CD8-positive, alpha-beta T cell (primary cell): ENCODE measurements at regions of chr6 and their contacts with region 1.

Region 1: DNA sequence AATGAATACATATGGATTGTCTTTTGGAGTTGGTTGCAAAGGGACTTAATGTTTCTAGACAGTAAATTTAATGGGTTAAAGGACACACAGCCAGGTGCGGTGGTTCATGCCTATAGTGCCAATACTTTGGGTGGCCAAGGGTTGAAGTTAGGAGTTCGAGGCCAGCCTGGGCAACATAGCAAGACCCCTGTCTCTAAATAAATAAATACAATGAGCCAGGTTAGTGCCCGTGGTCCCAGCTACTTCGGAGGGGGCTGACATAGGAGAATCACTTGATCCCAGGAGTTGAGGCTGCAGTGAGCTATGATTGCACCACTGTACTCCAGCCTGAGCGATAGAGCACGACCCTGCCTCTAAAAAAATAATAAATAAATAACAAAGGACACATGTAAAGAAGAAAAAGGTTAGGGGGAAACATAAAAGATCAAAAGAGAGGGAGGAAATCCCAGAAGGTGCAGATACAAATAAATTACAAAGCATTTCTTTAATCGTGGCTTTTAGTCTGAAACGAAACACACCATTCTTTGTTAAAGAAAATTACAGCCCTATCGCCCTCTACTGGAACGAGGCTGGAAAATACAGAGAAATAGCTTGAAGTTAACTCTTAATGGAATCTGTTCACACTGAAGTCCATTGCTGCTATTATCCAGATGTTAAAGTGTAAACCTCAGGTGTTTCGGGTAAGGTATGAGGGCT is 42.6 kb upstream of the SCML4 start:
- DNase-seq: peak in 6 of 9 experiments; percentile 9 to 75 (median 34)
- ATAC-seq: peak; percentile 70
- H3K4me3 ChIP-seq: no peak overlapping the region
- H3K4me3 Mint-ChIP-seq: no peak overlapping the region
- H3K27ac ChIP-seq: no peak overlapping the region
- H3K27ac Mint-ChIP-seq: no peak overlapping the region
- H3K4me1 ChIP-seq: no peaks in the 10 kb centered on the region
- H3K4me1 Mint-ChIP-seq: no peaks in the 10 kb centered on the region
- H3K27me3 ChIP-seq: no peaks in the 10 kb centered on the region
- H3K27me3 Mint-ChIP-seq: no peaks in the 10 kb centered on the region
- CTCF ChIP-seq: peak; percentile 82

Region 2: GRCh38 chr6:107132330-107132954 is 734.3 kb before region 1 on chr6:
- CTCF ChIA-PET with region 1: no interaction called
- POLR2A ChIA-PET with region 1: no interaction called
- intact Hi-C with region 1: loop called in 1 of 2 experiments (anchors 2 kb)
- DNase-seq: peak in 5 of 9 experiments; percentile 20 to 44 (median 33)
- ATAC-seq: no peak
- H3K4me3 ChIP-seq: no peak overlapping the region
- H3K4me3 Mint-ChIP-seq: no peak overlapping the region
- H3K27ac ChIP-seq: no peak overlapping the region
- H3K27ac Mint-ChIP-seq: no peak overlapping the region
- H3K4me1 ChIP-seq: no peaks in the 10 kb centered on the region
- H3K4me1 Mint-ChIP-seq: no peaks in the 10 kb centered on the region
- H3K27me3 ChIP-seq: no peaks in the 10 kb centered on the region
- H3K27me3 Mint-ChIP-seq: peaks cover 2% of the 10 kb centered on the region
- CTCF ChIP-seq: peak; percentile 39

Region 3: DNA sequence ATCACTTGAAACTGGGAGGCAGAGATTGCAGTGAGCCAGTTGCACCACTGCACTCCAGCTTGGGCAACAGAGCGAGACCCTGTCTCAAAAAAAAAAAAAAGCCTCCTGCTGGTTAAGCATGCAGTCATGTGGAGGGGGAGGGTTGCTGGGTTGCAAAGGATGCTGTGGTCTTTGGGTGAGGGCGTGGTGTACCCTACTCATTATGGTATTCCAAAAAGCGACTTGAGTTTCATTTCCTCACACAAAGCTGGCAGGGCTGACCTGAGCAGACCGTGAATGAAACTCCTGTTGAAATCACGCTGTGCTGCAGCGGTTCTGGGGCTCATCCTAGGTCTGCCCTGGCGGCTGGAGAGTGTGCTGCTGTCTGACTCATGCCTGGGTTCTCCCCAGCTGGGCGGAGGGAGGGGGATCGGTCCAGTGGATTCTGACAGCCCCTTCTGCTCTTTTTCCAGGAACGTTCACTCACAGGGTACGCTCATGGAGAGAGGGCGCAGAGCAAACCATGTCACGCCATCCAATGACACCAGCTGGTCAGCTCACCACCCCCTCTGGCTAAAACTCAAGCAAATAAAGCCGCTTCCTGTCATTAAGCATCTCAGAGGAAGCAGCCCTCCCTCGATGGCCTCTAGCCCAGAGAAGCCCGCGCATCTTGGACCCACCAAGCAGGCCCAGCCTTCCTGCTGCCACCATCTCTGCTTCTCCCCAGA is 208.8 kb before region 1 on chr6:
- CTCF ChIA-PET with region 1: no interaction called
- POLR2A ChIA-PET with region 1: no interaction called
- intact Hi-C with region 1: no loop called
- DNase-seq: peak in 8 of 9 experiments; percentile 29 to 68 (median 52)
- ATAC-seq: peak; percentile 90
- H3K4me3 ChIP-seq: peak overlapping the region; percentile 27 to 49
- H3K4me3 Mint-ChIP-seq: peak overlapping the region; percentile 81
- H3K27ac ChIP-seq: peak overlapping the region; percentile 4 to 47
- H3K27ac Mint-ChIP-seq: peak overlapping the region; percentile 78
- H3K4me1 ChIP-seq: peaks cover 30% of the 10 kb centered on the region
- H3K4me1 Mint-ChIP-seq: peaks cover 35% of the 10 kb centered on the region
- H3K27me3 ChIP-seq: no peaks in the 10 kb centered on the region
- H3K27me3 Mint-ChIP-seq: no peaks in the 10 kb centered on the region
- CTCF ChIP-seq: no peak

Region 4: DNA sequence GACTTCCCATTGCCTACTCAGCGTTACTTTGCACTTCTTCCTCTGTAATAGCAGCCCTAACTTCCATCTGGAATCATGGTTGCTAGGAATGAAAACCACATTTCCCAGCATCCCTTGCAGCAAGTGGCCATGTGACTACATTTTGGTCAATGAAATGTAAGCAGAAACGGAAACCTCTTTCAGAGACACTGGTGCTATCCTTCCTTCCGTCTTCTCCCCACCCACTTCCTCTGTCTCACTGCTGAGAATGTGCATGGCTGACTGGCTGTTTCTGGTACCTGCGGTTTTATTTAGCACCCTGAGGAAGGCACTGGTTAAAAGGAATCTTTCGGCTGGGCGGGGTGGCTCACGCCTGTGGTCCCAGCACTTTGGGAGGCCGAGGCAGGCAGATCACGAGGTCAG is 150.1 kb before region 1 on chr6:
- CTCF ChIA-PET with region 1: interaction called, 16 read pairs
- POLR2A ChIA-PET with region 1: interaction called, 3 read pairs
- intact Hi-C with region 1: no loop called
- DNase-seq: peak; percentile 46 to 95 (median 76)
- ATAC-seq: peak; percentile 85
- H3K4me3 ChIP-seq: no peak overlapping the region
- H3K4me3 Mint-ChIP-seq: peak overlapping the region; percentile 68
- H3K27ac ChIP-seq: peak overlapping the region in 1 of 2 experiments; percentile 79
- H3K27ac Mint-ChIP-seq: peak overlapping the region; percentile 91
- H3K4me1 ChIP-seq: peaks cover 54% of the 10 kb centered on the region
- H3K4me1 Mint-ChIP-seq: peaks cover 77% of the 10 kb centered on the region
- H3K27me3 ChIP-seq: no peaks in the 10 kb centered on the region
- H3K27me3 Mint-ChIP-seq: no peaks in the 10 kb centered on the region
- CTCF ChIP-seq: no peak

Region 5: DNA sequence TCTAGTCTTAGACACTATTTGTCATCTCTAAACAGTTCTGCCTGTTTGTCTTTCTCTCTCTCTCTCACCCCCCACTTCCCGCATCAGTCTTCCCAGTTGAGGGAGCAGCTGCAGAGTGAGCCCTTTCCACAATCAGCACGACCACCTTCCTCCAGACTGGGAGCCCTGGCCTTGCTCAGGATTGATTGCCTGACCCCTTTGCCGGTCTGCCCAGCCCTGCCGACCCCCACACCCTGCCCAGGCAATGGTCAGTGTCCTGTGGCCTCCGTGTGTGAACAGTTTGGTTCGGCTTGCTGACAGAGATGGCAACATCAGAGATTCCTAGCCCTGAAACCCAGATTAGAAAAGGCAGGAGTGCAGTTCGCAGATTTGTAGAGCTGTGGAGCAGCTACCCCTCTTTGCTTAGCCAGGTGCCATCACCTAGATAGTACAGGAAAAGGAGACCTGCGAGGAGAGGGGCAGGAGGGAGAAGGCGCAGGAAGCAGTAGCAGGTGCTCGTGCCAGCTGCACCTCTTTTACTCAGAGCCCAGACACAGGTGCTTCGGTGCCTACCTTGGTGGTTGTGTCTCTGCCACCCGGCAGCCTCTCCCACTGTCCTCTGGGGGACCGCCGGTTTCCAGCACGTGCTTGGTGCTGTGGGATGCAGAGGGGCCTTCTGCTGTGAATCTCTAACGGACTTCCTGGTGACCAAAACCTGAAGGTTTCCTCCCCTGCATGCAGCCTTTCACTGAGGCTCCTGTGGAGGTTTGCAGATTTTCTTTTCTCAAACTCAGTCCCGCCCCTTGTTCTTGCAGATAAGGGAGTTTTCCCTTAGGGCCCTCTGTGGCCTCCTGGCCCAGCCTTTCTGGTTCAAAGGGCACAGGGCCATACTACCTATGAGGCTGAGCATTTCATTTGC is 135.1 kb before region 1 on chr6:
- CTCF ChIA-PET with region 1: interaction called, 53 read pairs
- POLR2A ChIA-PET with region 1: interaction called, 3 read pairs
- intact Hi-C with region 1: loop called (anchors 1 to 2 kb)
- DNase-seq: peak in 6 of 9 experiments; percentile 37 to 74 (median 45)
- ATAC-seq: peak; percentile 31
- H3K4me3 ChIP-seq: peak overlapping the region; percentile 73 to 85
- H3K4me3 Mint-ChIP-seq: peak overlapping the region; percentile 88
- H3K27ac ChIP-seq: peak overlapping the region; percentile 43 to 83
- H3K27ac Mint-ChIP-seq: peak overlapping the region; percentile 94
- H3K4me1 ChIP-seq: peaks cover 82% of the 10 kb centered on the region
- H3K4me1 Mint-ChIP-seq: peaks cover 95% of the 10 kb centered on the region
- H3K27me3 ChIP-seq: no peaks in the 10 kb centered on the region
- H3K27me3 Mint-ChIP-seq: no peaks in the 10 kb centered on the region
- CTCF ChIP-seq: no peak

Region 6: DNA sequence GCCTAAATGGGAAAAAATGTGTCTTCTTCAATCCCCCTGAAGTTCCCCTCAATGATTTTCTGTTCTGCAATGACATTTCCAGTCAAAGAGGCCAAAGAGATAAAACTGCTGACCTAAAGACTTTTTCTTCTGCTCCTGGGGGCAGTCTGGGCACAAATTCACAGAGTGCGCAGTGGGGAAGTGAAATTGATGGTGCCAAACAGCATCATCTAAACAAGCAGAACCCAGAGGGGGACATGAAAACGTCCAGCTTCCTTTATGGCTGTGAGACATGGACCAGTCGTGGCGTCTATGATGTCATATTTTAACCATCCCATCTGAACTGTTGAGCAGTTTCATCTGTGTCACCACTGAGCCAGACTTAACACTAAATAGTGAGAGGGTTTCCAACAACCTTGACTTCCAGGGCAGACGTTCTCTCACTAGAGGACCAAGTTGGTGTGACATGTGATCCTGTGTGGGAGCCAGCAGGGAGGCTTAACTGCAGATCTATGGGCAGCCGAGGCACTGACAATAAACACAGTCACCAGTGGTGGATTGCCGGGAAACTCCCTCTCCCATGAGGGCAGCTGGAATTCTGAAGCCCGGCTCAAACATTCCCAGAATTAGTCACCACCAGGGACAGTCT is 55.0 kb before region 1 on chr6:
- CTCF ChIA-PET with region 1: interaction called, 11 read pairs
- POLR2A ChIA-PET with region 1: no interaction called
- intact Hi-C with region 1: no loop called
- DNase-seq: peak in 3 of 9 experiments; percentile 22 to 37 (median 28)
- ATAC-seq: peak; percentile 44
- H3K4me3 ChIP-seq: no peak overlapping the region
- H3K4me3 Mint-ChIP-seq: no peak overlapping the region
- H3K27ac ChIP-seq: no peak overlapping the region
- H3K27ac Mint-ChIP-seq: peak overlapping the region; percentile 64
- H3K4me1 ChIP-seq: peaks cover 30% of the 10 kb centered on the region
- H3K4me1 Mint-ChIP-seq: peaks cover 82% of the 10 kb centered on the region
- H3K27me3 ChIP-seq: no peaks in the 10 kb centered on the region
- H3K27me3 Mint-ChIP-seq: no peaks in the 10 kb centered on the region
- CTCF ChIP-seq: no peak

Region 7: GRCh38 chr6:107877968-107878367 is 11.2 kb after region 1 on chr6:
- CTCF ChIA-PET with region 1: no interaction called
- POLR2A ChIA-PET with region 1: no interaction called
- intact Hi-C with region 1: no loop called
- DNase-seq: no peak
- ATAC-seq: no peak
- H3K4me3 ChIP-seq: no peak overlapping the region
- H3K4me3 Mint-ChIP-seq: no peak overlapping the region
- H3K27ac ChIP-seq: no peak overlapping the region
- H3K27ac Mint-ChIP-seq: no peak overlapping the region
- H3K4me1 ChIP-seq: no peaks in the 10 kb centered on the region
- H3K4me1 Mint-ChIP-seq: no peaks in the 10 kb centered on the region
- H3K27me3 ChIP-seq: no peaks in the 10 kb centered on the region
- H3K27me3 Mint-ChIP-seq: no peaks in the 10 kb centered on the region
- CTCF ChIP-seq: no peak

Region 8: GRCh38 chr6:108039681-108040080 is 172.9 kb after region 1 on chr6:
- CTCF ChIA-PET with region 1: no interaction called
- POLR2A ChIA-PET with region 1: no interaction called
- intact Hi-C with region 1: loop called in 1 of 2 experiments (anchors 10 kb)
- DNase-seq: no peak
- ATAC-seq: no peak
- H3K4me3 ChIP-seq: no peak overlapping the region
- H3K4me3 Mint-ChIP-seq: no peak overlapping the region
- H3K27ac ChIP-seq: no peak overlapping the region
- H3K27ac Mint-ChIP-seq: no peak overlapping the region
- H3K4me1 ChIP-seq: no peaks in the 10 kb centered on the region
- H3K4me1 Mint-ChIP-seq: no peaks in the 10 kb centered on the region
- H3K27me3 ChIP-seq: no peaks in the 10 kb centered on the region
- H3K27me3 Mint-ChIP-seq: no peaks in the 10 kb centered on the region
- CTCF ChIP-seq: no peak

Region 9: DNA sequence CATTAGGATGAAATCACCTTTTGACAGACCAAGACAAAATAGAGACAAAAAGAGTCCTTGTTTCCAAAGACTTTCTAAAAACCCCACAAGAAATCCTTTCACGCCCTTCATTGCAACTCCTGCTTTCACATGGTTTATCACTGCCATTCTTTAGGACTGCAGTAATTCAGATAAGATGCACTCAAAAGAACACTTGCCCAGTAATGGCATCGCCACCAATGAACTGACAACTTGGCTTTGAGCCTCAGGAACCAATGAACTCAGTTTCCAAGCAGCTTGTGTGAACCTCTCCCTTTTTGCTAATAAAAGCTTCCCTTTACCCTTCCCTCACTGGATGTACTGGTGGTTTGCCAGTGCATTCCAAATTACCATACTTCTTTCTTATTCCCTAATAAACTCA is 186.0 kb after region 1 on chr6:
- CTCF ChIA-PET with region 1: interaction called, 6 read pairs
- POLR2A ChIA-PET with region 1: interaction called, 3 read pairs
- intact Hi-C with region 1: loop called (anchors 1 to 10 kb)
- DNase-seq: no peak
- ATAC-seq: no peak
- H3K4me3 ChIP-seq: no peak overlapping the region
- H3K4me3 Mint-ChIP-seq: no peak overlapping the region
- H3K27ac ChIP-seq: no peak overlapping the region
- H3K27ac Mint-ChIP-seq: no peak overlapping the region
- H3K4me1 ChIP-seq: no peaks in the 10 kb centered on the region
- H3K4me1 Mint-ChIP-seq: no peaks in the 10 kb centered on the region
- H3K27me3 ChIP-seq: no peaks in the 10 kb centered on the region
- H3K27me3 Mint-ChIP-seq: no peaks in the 10 kb centered on the region
- CTCF ChIP-seq: no peak